Dorsolateral prefrontal cortex (tissue), 120 donors: ENCODE measurements at regions of chr2 and their contacts with region 1.

Region 1: GRCh38 chr2:46887028-46887885 is 28.3 kb downstream of the MCFD2 start:
- DNase-seq: no peak
- H3K4me3 ChIP-seq: no peak overlapping the region
- H3K27ac ChIP-seq: no peak overlapping the region
- H3K27me3 ChIP-seq: no peaks in the 10 kb centered on the region
- CTCF ChIP-seq: no peak

Region 2: DNA sequence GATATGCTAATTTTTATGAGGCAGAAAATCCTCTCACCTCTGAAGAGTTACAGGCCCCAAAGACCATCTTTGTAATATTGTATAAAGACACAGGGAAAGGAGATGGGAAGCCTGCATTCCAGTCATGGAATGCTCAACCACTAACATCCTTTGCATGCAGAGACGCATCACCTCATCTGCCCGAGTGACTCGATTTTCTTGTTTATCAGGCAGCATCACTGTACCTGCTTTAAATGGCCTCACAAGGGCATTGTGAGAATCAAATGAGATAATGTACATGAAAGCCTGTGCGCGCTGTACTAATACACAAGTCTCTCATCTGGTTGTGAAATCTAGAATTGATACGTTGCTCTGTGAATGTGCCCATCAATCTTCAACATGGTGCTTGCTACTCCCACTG is 418.1 kb before region 1 on chr2:
- intact Hi-C with region 1: loop called in 1 of 2 experiments (anchors 5 kb)
- DNase-seq: no peak
- H3K4me3 ChIP-seq: no peak overlapping the region
- H3K27ac ChIP-seq: no peak overlapping the region
- H3K27me3 ChIP-seq: no peaks in the 10 kb centered on the region
- CTCF ChIP-seq: no peak

Region 3: GRCh38 chr2:46632349-46632748 is 254.9 kb before region 1 on chr2:
- intact Hi-C with region 1: loop called in 1 of 2 experiments (anchors 5 kb)
- DNase-seq: no peak
- H3K4me3 ChIP-seq: no peak overlapping the region
- H3K27ac ChIP-seq: no peak overlapping the region
- H3K27me3 ChIP-seq: no peaks in the 10 kb centered on the region
- CTCF ChIP-seq: peak in 55 of 56 donors; percentile 44 to 78 (median 62)